Natural killer cell (primary cell): ENCODE measurements at regions of chr3 and their contacts with region 1.

Region 1: GRCh38 chr3:51799879-51800749 is 21.1 kb upstream of the IQCF6 start:
- DNase-seq: peak in 1 of 2 donors; percentile 73
- ATAC-seq: peak; percentile 53 to 65 (median 62)
- H3K4me3 ChIP-seq: no peak overlapping the region
- H3K4me3 Mint-ChIP-seq: no peak overlapping the region
- H3K27ac ChIP-seq: no peak overlapping the region
- H3K27ac Mint-ChIP-seq: no peak overlapping the region
- H3K4me1 ChIP-seq: no peaks in the 10 kb centered on the region
- H3K4me1 Mint-ChIP-seq: peaks cover 0 to 10% of the 10 kb centered on the region in 2 donors
- H3K27me3 ChIP-seq: no peaks in the 10 kb centered on the region
- H3K27me3 Mint-ChIP-seq: peaks cover 16 to 35% of the 10 kb centered on the region in 2 donors
- CTCF ChIP-seq: peak; percentile 81

Region 2: GRCh38 chr3:51384726-51385473 is 415.2 kb before region 1 on chr3 and contains the start of gene MANF:
- intact Hi-C with region 1: loop called (anchors 5 kb)
- DNase-seq: peak; percentile 96 to 98
- ATAC-seq: peak; percentile 93 to 98 (median 94)
- H3K4me3 ChIP-seq: peak within 1 kb of the TSS; percentile 81
- H3K4me3 Mint-ChIP-seq: peak within 1 kb of the TSS; percentile 97
- H3K27ac ChIP-seq: peak within 1 kb of the TSS; percentile 85
- H3K27ac Mint-ChIP-seq: peak within 1 kb of the TSS; percentile 96 to 98
- H3K4me1 ChIP-seq: peaks cover 34% of the 10 kb centered on the region
- H3K4me1 Mint-ChIP-seq: peaks cover 45 to 46% of the 10 kb centered on the region in 2 donors
- H3K27me3 ChIP-seq: no peaks in the 10 kb centered on the region
- H3K27me3 Mint-ChIP-seq: no peaks in the 10 kb centered on the region
- CTCF ChIP-seq: peak; percentile 10
- total RNA-seq, gene MANF: 51.7 to 58.6 (median 58.3) TPM

Region 3: DNA sequence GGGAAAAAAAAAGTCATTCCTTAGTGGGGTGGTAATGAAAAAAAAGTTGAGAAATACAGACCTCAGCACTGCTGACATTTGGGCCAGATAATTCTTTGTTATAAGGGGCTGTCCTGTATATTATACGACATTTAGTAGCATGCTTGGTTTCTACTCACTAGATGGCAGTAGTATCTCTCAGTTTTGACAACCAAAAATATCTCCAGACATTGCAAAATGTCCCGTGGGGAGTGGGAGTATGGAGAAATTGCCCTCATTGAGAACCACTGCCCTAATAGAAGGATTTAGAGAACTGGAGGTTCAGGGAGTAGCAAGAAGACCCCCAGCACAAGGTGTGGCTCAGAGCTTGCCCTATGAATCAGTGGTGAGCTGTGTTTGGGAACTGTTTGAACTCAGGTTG is 157.7 kb before region 1 on chr3:
- intact Hi-C with region 1: loop called (anchors 1 kb)
- DNase-seq: peak in 1 of 2 donors; percentile 43
- ATAC-seq: no peak
- H3K4me3 ChIP-seq: no peak overlapping the region
- H3K4me3 Mint-ChIP-seq: no peak overlapping the region
- H3K27ac ChIP-seq: no peak overlapping the region
- H3K27ac Mint-ChIP-seq: peak overlapping the region in 1 of 2 donors; percentile 42
- H3K4me1 ChIP-seq: no peaks in the 10 kb centered on the region
- H3K4me1 Mint-ChIP-seq: no peaks in the 10 kb centered on the region
- H3K27me3 ChIP-seq: no peaks in the 10 kb centered on the region
- H3K27me3 Mint-ChIP-seq: no peaks in the 10 kb centered on the region
- CTCF ChIP-seq: peak; percentile 26